ENCODE measurements at regions of chr17 and their contacts with region 1.

Region 1: GRCh38 chr17:64236853-64237277 is 26.2 kb downstream of the TEX2 start:
- DNase-seq: no peak
- ATAC-seq: peak; percentile 84
- H3K4me3 Mint-ChIP-seq: no peak overlapping the region
- H3K27ac Mint-ChIP-seq: peak overlapping the region; percentile 21
- H3K4me1 Mint-ChIP-seq: peaks cover 41% of the 10 kb centered on the region
- H3K27me3 Mint-ChIP-seq: no peaks in the 10 kb centered on the region
- CTCF ChIP-seq: no peak

Region 2: GRCh38 chr17:64174686-64175456 is 62.0 kb before region 1 on chr17:
- CTCF ChIA-PET with region 1: no interaction called
- POLR2A ChIA-PET with region 1: no interaction called
- DNase-seq: no peak
- ATAC-seq: no peak
- H3K4me3 Mint-ChIP-seq: no peak overlapping the region
- H3K27ac Mint-ChIP-seq: no peak overlapping the region; the same call in 1 of the 2 replicates
- H3K4me1 Mint-ChIP-seq: no peaks in the 10 kb centered on the region
- H3K27me3 Mint-ChIP-seq: no peaks in the 10 kb centered on the region
- CTCF ChIP-seq: no peak

Region 3: DNA sequence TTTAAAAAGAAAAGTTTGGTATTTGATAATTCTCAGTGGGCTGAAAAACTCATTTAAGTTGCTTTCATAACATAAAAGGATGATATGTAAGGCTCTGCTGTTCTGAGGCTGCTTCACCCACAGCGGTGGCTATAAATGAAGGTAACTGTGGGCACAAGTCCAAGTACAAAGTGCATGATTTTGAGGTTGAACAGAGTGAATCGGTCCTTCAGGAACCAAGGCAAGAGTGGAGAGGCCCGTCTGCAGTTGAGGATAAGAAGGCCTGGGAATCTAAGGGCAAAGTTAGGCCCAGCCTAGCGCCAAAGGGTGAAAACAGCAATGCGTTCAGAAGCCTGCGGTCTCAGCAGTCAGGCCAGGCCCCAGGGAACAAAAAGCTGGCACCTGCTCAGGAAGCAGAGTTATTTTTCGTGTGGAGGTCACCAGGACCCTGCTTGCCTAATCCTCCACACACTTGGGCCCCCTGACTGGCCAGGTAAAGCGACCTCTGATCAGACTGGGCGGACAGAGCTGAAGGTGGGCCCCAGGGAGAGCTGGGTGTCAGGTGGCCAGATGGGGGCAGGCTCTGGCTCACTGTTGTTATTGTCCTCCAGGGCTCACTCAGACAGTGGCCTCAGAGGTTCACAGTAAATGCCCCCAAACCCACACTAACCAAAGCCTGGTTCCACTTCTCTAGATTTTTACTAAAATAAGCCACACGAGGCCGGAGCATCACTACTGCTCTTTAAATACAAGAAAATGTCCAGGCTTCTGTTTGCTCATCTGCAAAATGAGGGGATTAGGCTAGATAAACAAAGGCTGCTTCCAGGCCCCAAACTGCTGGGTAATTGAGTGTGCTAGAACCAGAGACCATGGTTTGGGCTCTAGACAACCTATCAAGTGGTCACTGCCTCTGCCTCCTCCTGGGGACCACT is 20.3 kb before region 1 on chr17:
- CTCF ChIA-PET with region 1: interaction called, 10 read pairs
- POLR2A ChIA-PET with region 1: no interaction called
- DNase-seq: peak; percentile 46
- ATAC-seq: peak; percentile 98
- H3K4me3 Mint-ChIP-seq: no peak overlapping the region
- H3K27ac Mint-ChIP-seq: peak overlapping the region; percentile 78; the same call in 1 of the 2 replicates
- H3K4me1 Mint-ChIP-seq: peaks cover 20% of the 10 kb centered on the region
- H3K27me3 Mint-ChIP-seq: no peaks in the 10 kb centered on the region
- CTCF ChIP-seq: no peak

Region 4: DNA sequence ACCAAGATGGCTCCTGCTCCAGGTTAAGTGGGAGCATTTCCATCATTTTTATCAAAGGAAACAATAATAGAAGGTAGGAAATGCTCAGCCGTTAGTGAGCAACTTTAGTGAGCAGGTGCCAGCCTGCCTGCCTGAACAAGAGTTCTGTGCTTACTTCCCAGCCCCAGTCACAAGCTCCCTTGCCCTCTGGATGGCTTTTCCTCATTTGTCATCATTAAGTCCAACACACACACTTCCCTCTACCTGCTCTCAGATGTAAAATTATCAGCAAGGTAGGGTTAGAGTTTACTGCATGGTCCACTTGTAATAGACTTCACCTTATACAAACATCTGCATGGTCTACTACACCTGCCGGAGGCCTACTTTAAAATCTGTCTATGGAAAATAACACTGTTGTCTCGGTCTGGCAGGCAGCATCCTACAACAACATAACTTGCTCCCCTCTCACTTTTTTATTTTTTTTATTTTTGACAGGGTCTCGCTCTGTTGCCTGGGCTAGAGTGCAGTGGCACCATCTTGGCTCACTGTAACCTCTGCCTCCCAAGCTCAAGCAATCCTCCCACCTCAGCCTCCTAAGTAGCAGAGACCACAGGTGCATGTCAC is 13.5 kb after region 1 on chr17:
- CTCF ChIA-PET with region 1: interaction called, 12 read pairs
- POLR2A ChIA-PET with region 1: no interaction called
- DNase-seq: no peak
- ATAC-seq: no peak
- H3K4me3 Mint-ChIP-seq: no peak overlapping the region
- H3K27ac Mint-ChIP-seq: no peak overlapping the region
- H3K4me1 Mint-ChIP-seq: no peaks in the 10 kb centered on the region
- H3K27me3 Mint-ChIP-seq: no peaks in the 10 kb centered on the region
- CTCF ChIP-seq: no peak

Region 5: DNA sequence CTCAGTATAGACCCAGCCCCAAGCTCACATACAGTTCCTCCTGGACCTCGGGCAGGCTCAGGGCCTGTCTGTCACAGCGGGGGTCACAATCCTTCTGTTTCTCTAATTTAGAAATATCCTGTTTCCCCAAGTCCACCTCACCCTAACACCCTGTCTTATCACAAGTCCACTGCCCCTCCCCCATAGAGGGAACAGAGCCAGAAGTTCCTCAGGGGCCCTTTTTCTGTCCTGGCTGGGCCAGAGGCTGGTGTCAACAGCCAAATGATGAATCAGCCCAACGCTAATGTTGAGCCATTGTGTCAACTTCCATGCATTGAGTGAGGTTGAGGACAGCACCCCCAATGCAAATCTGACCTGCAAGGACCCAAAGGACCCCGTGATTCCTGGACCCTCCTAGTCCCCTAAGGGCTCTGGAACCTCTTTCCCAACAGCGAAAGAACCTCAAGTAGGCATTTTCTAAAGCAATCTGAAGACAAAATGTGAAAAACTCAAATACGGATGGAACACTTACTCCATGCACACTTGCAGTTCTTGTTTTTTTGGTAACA is 95.2 kb after region 1 on chr17:
- CTCF ChIA-PET with region 1: no interaction called
- POLR2A ChIA-PET with region 1: no interaction called
- DNase-seq: no peak
- ATAC-seq: no peak
- H3K4me3 Mint-ChIP-seq: no peak overlapping the region
- H3K27ac Mint-ChIP-seq: no peak overlapping the region
- H3K4me1 Mint-ChIP-seq: peaks cover 9% of the 10 kb centered on the region
- H3K27me3 Mint-ChIP-seq: peaks cover 27% of the 10 kb centered on the region
- CTCF ChIP-seq: no peak